GM10248 (cell line): ENCODE measurements at regions of chrX and their contacts with region 1.

Region 1: DNA sequence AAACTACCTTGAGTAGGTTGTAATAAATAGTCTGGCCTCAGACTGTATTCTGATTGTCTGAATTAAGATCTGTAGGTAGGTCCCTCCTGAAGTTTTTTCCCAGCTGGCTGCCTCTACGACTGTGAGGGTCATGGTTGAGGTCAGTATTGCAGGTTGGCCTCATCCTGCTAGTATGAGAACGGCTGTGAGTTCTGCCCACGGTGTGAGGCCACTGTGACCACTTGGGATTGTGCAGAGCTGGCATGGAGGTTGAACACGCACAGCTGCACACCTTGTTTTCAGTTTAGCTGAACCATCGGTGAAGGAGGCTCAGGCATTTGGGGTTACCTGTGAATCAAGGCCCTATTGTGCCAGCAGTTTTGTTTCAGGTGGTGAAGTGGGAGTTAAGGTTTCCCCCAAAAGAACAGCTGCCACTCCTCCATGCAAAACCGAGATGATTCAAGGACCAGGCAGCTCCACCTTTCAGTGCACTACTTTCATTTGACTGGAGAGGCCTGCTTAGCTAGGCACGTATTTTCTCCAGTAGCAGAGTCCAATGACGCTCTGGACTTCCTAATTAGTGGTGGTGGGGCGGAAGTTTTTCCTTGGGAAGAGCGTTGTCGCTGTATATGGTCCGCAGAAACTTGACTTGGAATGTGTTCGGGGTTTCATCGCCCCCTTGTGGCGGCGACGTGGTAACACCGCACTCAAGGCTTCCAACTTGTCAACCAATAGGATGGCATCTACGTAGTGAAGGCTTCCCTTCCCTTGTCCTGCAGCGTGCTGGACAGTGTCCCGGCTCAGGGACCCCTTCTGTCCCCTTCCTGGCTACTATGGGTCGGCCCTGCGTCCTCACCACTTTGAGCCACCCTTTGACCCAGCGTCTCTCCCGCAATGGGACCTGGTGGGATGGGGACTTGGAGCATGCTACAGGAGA is 13.8 kb downstream of the CMC4 start:
- DNase-seq: peak; percentile 51
- CTCF ChIP-seq: peak; percentile 61

Region 2: GRCh38 chrX:154918060-154918483 is 139.1 kb before region 1 on chrX:
- CTCF ChIA-PET with region 1: interaction called, 25 read pairs
- POLR2A ChIA-PET with region 1: no interaction called
- DNase-seq: peak; percentile 31
- CTCF ChIP-seq: peak; percentile 52

Region 3: GRCh38 chrX:154980330-154981096 is 76.6 kb before region 1 on chrX:
- CTCF ChIA-PET with region 1: interaction called, 27 read pairs
- POLR2A ChIA-PET with region 1: no interaction called
- DNase-seq: peak; percentile 61
- CTCF ChIP-seq: peak; percentile 64

Region 4: DNA sequence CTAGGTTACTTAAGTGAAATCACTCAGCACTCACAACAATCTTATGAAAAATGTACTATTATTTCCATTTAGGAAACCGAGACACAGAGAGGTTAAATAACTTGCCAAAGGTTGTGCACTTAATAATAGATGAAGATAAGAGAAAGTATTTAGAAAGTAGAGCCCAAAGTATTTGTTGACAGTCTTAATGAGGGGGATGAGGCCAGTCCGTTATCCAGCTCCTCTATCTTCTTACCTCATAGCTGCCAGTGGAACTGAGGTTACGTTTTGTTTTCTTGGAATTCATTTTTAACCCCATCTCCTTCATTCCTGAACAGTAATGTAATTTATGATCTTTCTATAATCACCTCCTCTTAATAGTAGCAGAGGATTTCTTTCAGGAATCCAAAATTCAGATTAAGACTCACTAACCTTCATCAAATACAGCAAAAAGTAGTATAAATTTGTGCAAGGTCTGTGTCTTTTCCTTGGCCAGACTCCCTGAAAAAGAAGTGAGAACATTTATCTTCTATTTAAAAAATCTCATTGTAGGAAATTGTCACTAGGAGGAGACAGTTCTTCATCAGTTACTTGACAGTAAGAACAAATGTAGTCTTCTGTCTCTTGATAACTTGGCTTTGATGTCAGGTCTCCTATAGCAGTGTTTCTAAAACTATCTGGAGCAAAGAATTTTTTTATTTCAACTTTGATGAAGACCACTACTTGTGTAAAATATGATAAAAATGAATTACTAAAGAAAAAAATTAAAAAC is 70.1 kb before region 1 on chrX:
- CTCF ChIA-PET with region 1: interaction called, 27 read pairs
- POLR2A ChIA-PET with region 1: no interaction called
- DNase-seq: no peak
- CTCF ChIP-seq: peak; percentile 23